ENCODE measurements at regions of chr2 and their contacts with region 1.

Region 1: DNA sequence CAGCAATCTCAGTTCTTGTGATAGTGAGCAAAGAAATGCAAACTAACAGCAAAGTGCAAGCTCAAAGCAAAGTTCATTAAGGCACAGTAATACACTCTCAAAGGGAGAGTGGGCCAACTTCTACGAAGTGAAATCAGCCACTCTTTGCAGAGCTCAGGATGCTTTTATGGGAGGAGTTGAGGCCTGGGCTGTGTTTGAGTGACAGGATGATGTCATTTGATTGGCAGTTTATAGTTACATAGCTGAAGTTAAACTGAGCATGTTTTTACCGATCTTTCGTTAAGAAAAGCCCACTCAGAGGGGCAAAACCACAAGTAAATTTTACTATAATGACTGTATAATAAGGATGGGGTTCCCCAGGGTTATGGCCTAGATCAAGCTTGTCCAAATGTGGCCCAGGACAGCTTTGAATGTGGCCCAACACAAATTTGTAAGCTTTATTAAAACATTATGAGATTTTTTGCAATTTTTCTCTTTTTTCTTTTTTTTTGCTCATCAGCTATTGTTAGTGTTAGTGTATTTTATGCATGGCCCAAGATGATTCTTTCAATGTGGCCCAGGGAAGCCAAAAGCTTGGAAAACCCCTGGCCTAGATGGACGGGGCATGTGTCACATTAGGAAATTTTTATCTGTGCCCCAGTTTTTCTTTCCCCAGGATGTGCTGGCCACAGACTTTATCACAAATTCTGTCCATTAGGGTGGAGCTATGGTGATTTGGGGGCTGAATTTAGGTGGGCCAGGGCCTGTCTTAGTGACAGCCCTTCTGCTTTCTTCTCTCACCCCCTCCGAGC is 8.3 kb upstream of the DNAH7 start:
- DNase-seq: no peak
- H3K4me3 ChIP-seq: no peak overlapping the region
- H3K27ac ChIP-seq: no peak overlapping the region
- H3K4me1 ChIP-seq: no peaks in the 10 kb centered on the region
- H3K27me3 ChIP-seq: no peaks in the 10 kb centered on the region
- CTCF ChIP-seq: no peak
- EP300 ChIP-seq: no peak
- POLR2A ChIP-seq: no peak

Region 2: GRCh38 chr2:195656859-195657633 is 419.9 kb before region 1 on chr2 and contains the start of gene SLC39A10:
- intact Hi-C with region 1: no loop called
- DNase-seq: peak; percentile 99
- H3K4me3 ChIP-seq: peak within 1 kb of the TSS; percentile 61 to 99 (median 96)
- H3K27ac ChIP-seq: peak within 1 kb of the TSS; percentile 93 to 100 (median 100)
- H3K4me1 ChIP-seq: peaks cover 0 to 32% (median 22%) of the 10 kb centered on the region in 4 donors
- H3K27me3 ChIP-seq: no peaks in the 10 kb centered on the region
- CTCF ChIP-seq: peak in 2 of 4 experiments; percentile 10 to 43
- EP300 ChIP-seq: no peak
- POLR2A ChIP-seq: peak; percentile 89 to 94
- total RNA-seq, gene SLC39A10: 6.1 to 10.5 (median 9.7) TPM

Region 3: DNA sequence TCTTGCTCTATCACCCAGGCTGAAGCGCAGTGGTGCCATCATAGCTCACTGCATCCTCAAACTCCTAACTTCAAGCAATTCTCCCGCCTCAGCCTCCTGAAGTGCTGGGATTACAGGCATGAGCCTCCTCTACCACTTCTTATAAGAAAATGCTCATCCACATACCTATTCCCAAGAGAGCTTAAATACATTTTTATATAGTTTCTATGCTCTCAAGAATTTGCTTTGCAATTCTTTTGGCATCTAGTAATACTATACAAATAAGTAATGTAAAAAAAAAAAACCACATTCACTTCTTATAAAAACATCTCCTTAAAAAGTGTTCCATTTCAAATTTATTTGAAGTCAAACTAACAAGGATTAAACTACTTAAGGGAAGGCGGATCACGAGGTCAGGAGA is 205.6 kb before region 1 on chr2:
- intact Hi-C with region 1: no loop called
- DNase-seq: no peak
- H3K4me3 ChIP-seq: no peak overlapping the region
- H3K27ac ChIP-seq: no peak overlapping the region
- H3K4me1 ChIP-seq: no peaks in the 10 kb centered on the region
- H3K27me3 ChIP-seq: no peaks in the 10 kb centered on the region
- CTCF ChIP-seq: no peak
- EP300 ChIP-seq: no peak
- POLR2A ChIP-seq: no peak

Region 4: DNA sequence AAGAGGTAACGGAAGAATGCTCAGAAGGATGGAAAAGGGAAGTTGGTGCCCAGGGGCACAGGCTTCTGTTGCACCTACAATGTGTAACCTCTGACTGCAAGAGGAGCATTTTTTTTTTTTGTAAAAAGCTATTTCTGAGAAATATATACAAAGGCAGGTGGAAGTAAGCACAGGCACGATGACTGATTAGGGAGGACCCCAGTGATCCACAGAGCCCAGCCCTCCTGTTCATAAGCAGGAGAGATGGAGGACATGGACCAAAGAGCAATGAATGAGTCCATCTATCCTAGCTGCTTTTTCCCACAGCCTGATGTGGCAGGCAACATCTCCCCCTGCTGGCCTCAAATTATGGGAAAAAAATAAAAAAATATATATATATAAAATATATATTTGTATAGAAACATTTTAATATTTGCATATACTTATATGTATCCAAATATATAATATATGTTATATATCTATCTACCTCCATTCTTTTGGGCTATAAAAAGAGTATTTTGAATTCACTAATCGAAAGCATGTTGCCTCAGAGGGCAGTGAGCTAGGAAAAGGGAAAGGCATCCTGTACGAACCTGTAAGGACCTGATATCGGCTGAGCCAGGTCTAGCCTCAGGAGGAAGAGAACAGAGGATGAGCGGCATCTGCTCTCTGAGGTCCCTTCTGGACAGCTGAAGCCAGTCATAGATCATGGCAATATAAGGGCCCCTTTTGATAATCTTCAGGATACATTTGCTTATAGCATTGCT is 260.4 kb after region 1 on chr2:
- intact Hi-C with region 1: loop called (anchors 5 kb)
- DNase-seq: no peak
- H3K4me3 ChIP-seq: no peak overlapping the region
- H3K27ac ChIP-seq: no peak overlapping the region
- H3K4me1 ChIP-seq: no peaks in the 10 kb centered on the region
- H3K27me3 ChIP-seq: no peaks in the 10 kb centered on the region
- CTCF ChIP-seq: peak in 2 of 4 experiments; percentile 19 to 26
- EP300 ChIP-seq: no peak
- POLR2A ChIP-seq: no peak